Aorta (tissue), 5 donors: ENCODE measurements at regions of chr17 and their contacts with region 1.

Region 1: DNA sequence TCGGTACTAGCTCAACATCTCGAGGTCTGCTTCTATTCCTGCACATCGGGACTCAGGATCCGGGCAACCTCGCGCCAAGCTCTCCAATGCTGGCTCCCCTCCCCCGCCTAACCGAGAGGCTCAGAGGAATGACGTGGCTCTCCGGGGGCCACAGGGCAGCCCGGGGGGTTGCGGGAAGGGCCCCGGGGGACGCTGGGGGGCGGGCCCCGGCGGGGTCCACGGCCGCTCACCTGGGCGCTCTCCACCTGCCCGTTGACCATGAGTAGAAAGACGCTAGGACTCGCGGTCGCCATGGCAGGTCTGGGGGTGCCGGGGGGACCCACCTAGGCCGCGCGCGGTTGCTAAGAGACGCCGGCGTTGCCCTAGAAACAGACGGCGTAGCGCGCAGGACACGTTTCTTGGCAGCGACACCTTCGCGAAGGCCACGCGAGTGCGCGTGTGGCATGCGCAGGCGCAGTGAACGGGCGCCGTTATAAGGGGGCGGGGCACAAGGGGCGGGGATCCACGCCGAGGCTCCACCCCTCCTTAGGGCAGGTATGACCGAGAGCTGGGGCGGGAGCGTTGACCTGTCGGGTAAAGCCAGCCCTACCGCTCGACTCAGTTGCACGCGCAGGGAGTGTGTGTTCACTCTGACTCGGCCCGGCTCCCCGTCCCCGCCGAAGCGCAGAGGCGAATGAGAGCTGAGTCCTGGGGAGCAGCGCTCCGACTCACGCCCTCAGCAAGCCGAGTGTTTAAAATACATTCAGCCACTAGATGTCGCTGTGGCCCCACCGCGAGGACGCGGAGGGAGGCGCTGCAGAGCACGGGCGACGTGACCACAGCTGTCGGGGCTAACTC is at the start of gene B9D1:
- DNase-seq: peak; percentile 94 to 98
- ATAC-seq: peak; percentile 97
- H3K4me3 ChIP-seq: peak within 1 kb of the TSS; percentile 41 to 51
- H3K27ac ChIP-seq: peak within 1 kb of the TSS in 1 of 2 donors; percentile 53
- H3K4me1 ChIP-seq: no peaks in the 10 kb centered on the region
- H3K27me3 ChIP-seq: no peaks in the 10 kb centered on the region
- total RNA-seq, gene B9D1: 7.3 to 8.9 TPM

Region 2: DNA sequence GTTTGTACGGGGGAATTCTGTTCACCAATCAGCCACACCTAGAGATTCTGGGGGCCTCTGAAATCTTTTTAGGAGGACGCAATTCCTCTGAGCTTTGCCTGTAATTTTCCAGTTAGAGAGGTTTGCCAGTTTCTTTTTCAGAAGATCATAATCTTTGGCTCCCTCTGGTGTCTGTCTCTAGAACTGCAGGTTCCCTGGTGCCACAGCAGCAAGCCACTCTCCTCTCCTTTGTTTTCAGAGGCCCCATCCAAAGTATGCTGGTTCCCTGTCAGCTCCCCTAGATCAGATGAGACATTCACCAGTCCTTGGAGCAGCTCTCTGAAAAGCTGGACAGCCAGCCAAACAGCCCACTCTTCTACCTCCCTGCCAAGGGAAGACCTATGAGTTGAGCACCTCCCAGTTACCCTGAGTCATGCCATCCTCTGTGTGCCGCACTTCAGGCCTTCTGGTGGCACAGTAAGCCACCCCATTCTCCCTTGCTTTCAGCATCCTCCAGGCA is 84.6 kb after region 1 on chr17:
- intact Hi-C with region 1: loop called (anchors 1 to 5 kb)
- DNase-seq: peak; percentile 64 to 80
- ATAC-seq: peak; percentile 90
- H3K4me3 ChIP-seq: no peak overlapping the region
- H3K27ac ChIP-seq: peak overlapping the region in 1 of 2 donors; percentile 92
- H3K4me1 ChIP-seq: peaks cover 0 to 5% of the 10 kb centered on the region in 2 donors
- H3K27me3 ChIP-seq: no peaks in the 10 kb centered on the region

Region 3: DNA sequence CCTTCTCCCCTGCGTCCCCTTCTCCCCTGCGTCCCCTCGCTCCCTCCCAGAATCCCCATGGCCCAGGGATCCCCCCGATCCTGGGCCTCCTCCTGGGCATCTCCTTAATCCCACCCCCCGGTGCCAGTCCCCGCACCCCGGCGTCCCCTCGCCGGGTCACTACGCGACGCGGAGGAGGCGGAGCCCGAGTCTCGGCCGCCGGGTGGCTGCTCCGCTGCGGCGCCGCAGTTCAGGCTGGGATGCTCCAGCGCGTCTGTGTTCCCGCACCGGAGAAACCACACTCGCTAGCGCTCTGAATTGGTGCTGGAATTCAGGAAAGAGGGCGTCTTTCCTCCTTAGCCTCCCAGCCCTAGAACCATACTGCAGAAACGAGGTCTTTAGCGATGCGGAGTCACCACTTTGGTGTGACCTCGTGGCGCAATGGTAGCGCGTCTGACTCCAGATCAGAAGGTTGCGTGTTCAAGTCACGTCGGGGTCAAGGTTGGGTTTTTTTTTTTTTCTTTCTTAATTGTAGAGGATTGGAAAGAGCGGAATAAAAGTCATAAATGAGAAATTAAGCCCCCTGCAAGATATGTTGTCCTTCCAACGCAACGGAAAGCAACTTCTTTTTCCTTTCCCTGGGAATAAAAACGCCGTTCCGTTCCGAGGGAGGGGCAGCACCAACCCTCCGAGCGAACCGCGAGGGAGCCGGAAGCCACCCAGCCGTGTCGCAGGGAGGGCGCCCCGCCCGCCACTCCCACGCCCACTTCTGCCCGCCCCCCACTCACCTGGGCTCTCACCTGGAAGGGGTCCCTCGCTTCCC is 145.5 kb after region 1 on chr17:
- intact Hi-C with region 1: loop called in 1 of 2 experiments (anchors 10 kb)
- DNase-seq: peak; percentile 89 to 95
- ATAC-seq: peak; percentile 95
- H3K4me3 ChIP-seq: peak overlapping the region; percentile 73 to 77
- H3K27ac ChIP-seq: peak overlapping the region; percentile 88 to 90
- H3K4me1 ChIP-seq: no peaks in the 10 kb centered on the region
- H3K27me3 ChIP-seq: no peaks in the 10 kb centered on the region

Region 4: GRCh38 chr17:19648475-19649406 is 286.2 kb after region 1 on chr17 and contains the start of gene ALDH3A2:
- intact Hi-C with region 1: loop called in 1 of 2 experiments (anchors 10 kb)
- DNase-seq: peak; percentile 99 to 100
- ATAC-seq: peak; percentile 100
- H3K4me3 ChIP-seq: peak within 1 kb of the TSS; percentile 56 to 90
- H3K27ac ChIP-seq: peak within 1 kb of the TSS; percentile 52 to 98
- H3K4me1 ChIP-seq: peaks cover 0 to 23% of the 10 kb centered on the region in 2 donors
- H3K27me3 ChIP-seq: no peaks in the 10 kb centered on the region
- total RNA-seq, gene ALDH3A2: 55.7 to 78.6 TPM

Region 5: DNA sequence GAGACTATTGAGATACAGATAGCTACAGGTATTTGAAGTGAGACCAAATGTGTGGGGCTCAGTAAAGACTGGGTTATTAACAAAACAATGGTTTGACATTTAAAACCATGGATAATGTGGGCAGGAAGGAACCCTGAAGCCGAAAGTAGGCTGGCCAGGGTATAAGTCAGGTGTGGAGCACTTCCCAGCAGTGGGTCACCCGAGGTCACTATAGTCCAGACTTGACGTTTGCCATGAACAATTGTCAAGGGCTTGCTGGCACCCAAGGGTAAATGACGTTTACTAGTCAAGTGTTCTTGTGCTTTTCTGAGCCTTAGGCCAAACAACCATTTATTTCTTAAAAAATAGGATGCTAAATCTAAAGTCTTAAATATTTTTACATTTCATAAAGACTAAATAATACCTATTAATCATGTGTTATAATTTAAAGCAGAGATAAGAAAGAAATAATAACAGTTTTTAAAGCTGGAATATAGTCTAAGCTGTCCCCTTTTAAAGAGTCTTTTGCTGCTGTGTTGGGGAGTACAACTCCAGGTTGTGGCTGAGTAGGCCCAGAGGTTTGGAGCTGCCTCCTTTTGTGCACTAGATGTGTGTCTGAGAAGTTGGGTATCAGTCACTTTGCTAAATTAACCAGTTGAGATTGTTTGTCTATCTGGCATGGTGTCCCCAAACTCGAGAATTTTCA is 301.8 kb after region 1 on chr17:
- intact Hi-C with region 1: loop called in 1 of 2 experiments (anchors 10 kb)
- DNase-seq: no peak
- ATAC-seq: no peak
- H3K4me3 ChIP-seq: no peak overlapping the region
- H3K27ac ChIP-seq: no peak overlapping the region
- H3K4me1 ChIP-seq: peaks cover 0 to 6% of the 10 kb centered on the region in 2 donors
- H3K27me3 ChIP-seq: peaks cover 0 to 2% of the 10 kb centered on the region in 2 donors

Region 6: GRCh38 chr17:19766422-19767270 is 404.2 kb after region 1 on chr17:
- intact Hi-C with region 1: loop called (anchors 2 to 5 kb)
- DNase-seq: peak; percentile 84 to 95
- ATAC-seq: peak; percentile 90
- H3K4me3 ChIP-seq: no peak overlapping the region
- H3K27ac ChIP-seq: no peak overlapping the region
- H3K4me1 ChIP-seq: peaks cover 0 to 5% of the 10 kb centered on the region in 2 donors
- H3K27me3 ChIP-seq: no peaks in the 10 kb centered on the region